Activated B cell treated with CpG ODN at 0.5 μM for 24 hours (primary cell): ENCODE measurements at regions of chr1 and their contacts with region 1.

Region 1: DNA sequence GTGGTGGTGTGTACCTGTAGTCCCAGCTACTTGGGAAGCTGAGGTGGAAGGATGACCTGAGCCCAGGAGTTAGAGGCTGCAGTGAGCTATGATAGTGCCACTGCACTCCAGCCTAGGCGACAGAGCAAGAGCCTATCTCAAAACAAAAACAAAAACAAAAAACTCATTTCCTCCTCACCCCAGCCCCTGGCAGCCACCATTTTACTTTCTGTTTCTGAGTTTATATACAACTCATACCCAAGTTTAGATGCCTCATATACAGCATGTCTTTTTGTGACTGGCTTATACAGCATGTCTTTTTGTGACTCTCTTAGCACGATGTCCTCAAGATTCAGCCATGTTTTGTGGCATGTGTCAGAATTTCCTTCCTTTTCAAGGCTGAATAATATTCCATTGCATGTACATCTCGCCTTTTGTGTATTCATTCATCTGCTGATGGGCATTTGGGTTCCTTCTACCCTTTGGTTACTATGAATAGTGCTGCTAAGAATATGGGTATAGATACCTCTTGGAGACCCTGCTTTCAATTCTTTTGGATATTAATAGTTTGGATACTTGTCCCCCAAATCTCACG is 14.7 kb downstream of the COA7 start:
- DNase-seq: no peak
- ATAC-seq: no peak
- H3K4me3 Mint-ChIP-seq: no peak overlapping the region
- H3K27ac Mint-ChIP-seq: no peak overlapping the region
- H3K4me1 Mint-ChIP-seq: peaks cover 44% of the 10 kb centered on the region
- H3K27me3 Mint-ChIP-seq: no peaks in the 10 kb centered on the region
- CTCF ChIP-seq: no peak

Region 2: GRCh38 chr1:52127181-52128180 is 556.0 kb before region 1 on chr1:
- CTCF ChIA-PET with region 1: no interaction called
- POLR2A ChIA-PET with region 1: no interaction called
- intact Hi-C with region 1: loop called (anchors 1 kb)
- DNase-seq: no peak
- ATAC-seq: no peak
- H3K4me3 Mint-ChIP-seq: no peak overlapping the region
- H3K27ac Mint-ChIP-seq: no peak overlapping the region
- H3K4me1 Mint-ChIP-seq: peaks cover 4% of the 10 kb centered on the region
- H3K27me3 Mint-ChIP-seq: peaks cover 23% of the 10 kb centered on the region
- CTCF ChIP-seq: no peak

Region 3: GRCh38 chr1:52365746-52366516 is 317.5 kb before region 1 on chr1 and contains the start of gene CC2D1B:
- CTCF ChIA-PET with region 1: interaction called, 4 read pairs
- POLR2A ChIA-PET with region 1: interaction called, 4 read pairs
- intact Hi-C with region 1: loop called (anchors 1 kb)
- DNase-seq: peak; percentile 100
- ATAC-seq: peak; percentile 95
- H3K4me3 Mint-ChIP-seq: peak within 1 kb of the TSS; percentile 94
- H3K27ac Mint-ChIP-seq: peak within 1 kb of the TSS; percentile 88
- H3K4me1 Mint-ChIP-seq: peaks cover 30% of the 10 kb centered on the region
- H3K27me3 Mint-ChIP-seq: peaks cover 2% of the 10 kb centered on the region
- CTCF ChIP-seq: no peak
- total RNA-seq, gene CC2D1B: 51.3 and 66.4 TPM in 2 replicates

Region 4: DNA sequence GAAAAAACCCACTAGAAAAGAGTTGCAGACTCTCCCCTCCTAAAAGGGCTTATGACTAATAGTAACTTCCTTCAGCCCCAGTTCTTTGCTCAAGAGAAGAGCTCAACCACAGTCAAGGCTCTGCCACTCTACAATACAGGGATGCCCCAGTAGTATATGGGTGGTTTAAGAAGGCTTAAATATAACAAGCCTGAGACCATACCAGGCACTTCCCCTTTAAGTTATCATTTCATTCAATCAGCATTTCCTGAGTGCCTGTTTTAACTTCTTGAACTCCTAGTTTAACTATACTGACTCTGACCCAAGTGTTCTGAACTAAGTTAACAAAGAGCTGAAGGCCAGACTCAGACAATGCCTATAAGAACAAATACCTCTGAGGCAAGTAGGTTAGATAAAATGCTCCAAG is 259.2 kb before region 1 on chr1:
- CTCF ChIA-PET with region 1: no interaction called
- POLR2A ChIA-PET with region 1: interaction called, 3 read pairs
- intact Hi-C with region 1: loop called (anchors 5 kb)
- DNase-seq: no peak
- ATAC-seq: peak; percentile 73
- H3K4me3 Mint-ChIP-seq: no peak overlapping the region
- H3K27ac Mint-ChIP-seq: peak overlapping the region; percentile 66
- H3K4me1 Mint-ChIP-seq: peaks cover 14% of the 10 kb centered on the region
- H3K27me3 Mint-ChIP-seq: no peaks in the 10 kb centered on the region
- CTCF ChIP-seq: no peak

Region 5: DNA sequence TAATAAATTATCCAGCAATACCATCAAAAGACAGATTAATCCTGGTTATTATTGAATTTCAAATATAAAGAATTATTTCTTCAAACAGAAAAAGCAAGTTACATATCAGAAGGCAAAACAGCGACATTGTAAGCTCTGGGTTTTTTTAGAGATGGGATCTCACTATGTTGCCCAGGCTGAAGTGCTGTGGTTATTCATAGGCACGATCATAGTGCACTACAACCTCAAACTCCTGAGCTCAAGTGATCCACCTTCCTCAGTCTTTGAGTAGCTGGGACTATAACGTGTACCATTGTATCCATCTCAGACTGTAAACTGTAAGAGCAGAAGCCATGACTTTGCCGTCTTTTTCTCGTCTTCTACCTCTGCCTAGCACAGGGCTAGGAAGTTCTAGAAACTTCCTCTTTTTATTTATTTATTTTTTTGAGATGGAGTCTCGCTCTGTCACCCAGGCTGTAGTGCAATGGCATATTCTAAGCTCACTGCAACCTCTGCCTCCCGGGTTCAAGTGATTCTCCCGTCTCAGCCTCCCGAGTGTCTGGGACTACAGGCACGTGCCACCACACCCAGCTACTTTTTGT is 101.2 kb before region 1 on chr1:
- CTCF ChIA-PET with region 1: no interaction called
- POLR2A ChIA-PET with region 1: interaction called, 12 read pairs
- intact Hi-C with region 1: no loop called
- DNase-seq: no peak
- ATAC-seq: no peak
- H3K4me3 Mint-ChIP-seq: no peak overlapping the region
- H3K27ac Mint-ChIP-seq: no peak overlapping the region
- H3K4me1 Mint-ChIP-seq: peaks cover 7% of the 10 kb centered on the region
- H3K27me3 Mint-ChIP-seq: no peaks in the 10 kb centered on the region
- CTCF ChIP-seq: no peak